ENCODE measurements at regions of chr10 and their contacts with region 1.

Region 1: GRCh38 chr10:91298224-91298871 is 77.9 kb downstream of the PCGF5 start:
- DNase-seq: peak; percentile 86
- H3K4me3 ChIP-seq: peak overlapping the region; percentile 45
- H3K27ac ChIP-seq: no peak overlapping the region
- H3K4me1 ChIP-seq: peaks cover 10% of the 10 kb centered on the region
- H3K27me3 ChIP-seq: no peaks in the 10 kb centered on the region
- CTCF ChIP-seq: peak; percentile 93

Region 2: GRCh38 chr10:91367127-91367531 is 68.8 kb after region 1 on chr10:
- CTCF ChIA-PET with region 1: interaction called, 7 read pairs
- POLR2A ChIA-PET with region 1: no interaction called
- intact Hi-C with region 1: loop called (anchors 1 kb)
- DNase-seq: no peak
- H3K4me3 ChIP-seq: no peak overlapping the region
- H3K27ac ChIP-seq: no peak overlapping the region
- H3K4me1 ChIP-seq: no peaks in the 10 kb centered on the region
- H3K27me3 ChIP-seq: no peaks in the 10 kb centered on the region
- CTCF ChIP-seq: no peak

Region 3: GRCh38 chr10:91479583-91479982 is 181.2 kb after region 1 on chr10:
- CTCF ChIA-PET with region 1: no interaction called
- POLR2A ChIA-PET with region 1: no interaction called
- intact Hi-C with region 1: loop called (anchors 10 kb)
- DNase-seq: no peak
- H3K4me3 ChIP-seq: no peak overlapping the region
- H3K27ac ChIP-seq: no peak overlapping the region
- H3K4me1 ChIP-seq: no peaks in the 10 kb centered on the region
- H3K27me3 ChIP-seq: no peaks in the 10 kb centered on the region
- CTCF ChIP-seq: no peak

Region 4: DNA sequence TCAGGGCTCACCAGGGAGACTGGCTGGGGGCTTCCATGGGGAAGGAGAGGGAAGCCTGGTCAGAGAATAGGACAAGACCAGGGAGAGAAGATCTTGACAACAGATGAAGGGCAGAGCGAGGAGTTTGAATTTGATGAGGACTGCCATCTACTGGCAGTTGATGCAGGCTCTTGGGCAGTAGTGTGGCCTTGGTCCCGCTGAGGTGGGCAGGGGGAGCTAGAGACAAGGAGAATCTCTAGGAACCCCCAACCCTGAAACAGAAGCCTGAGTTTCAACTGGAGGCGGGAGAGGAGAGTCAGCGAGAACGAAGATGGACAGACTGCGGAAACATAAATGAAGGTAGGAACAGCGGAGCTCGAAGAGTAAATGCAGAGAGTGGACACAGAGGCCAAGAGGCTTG is 253.5 kb after region 1 on chr10:
- CTCF ChIA-PET with region 1: interaction called, 11 read pairs
- POLR2A ChIA-PET with region 1: no interaction called
- intact Hi-C with region 1: loop called (anchors 1 kb)
- DNase-seq: peak; percentile 78
- H3K4me3 ChIP-seq: no peak overlapping the region
- H3K27ac ChIP-seq: no peak overlapping the region
- H3K4me1 ChIP-seq: peaks cover 3% of the 10 kb centered on the region
- H3K27me3 ChIP-seq: no peaks in the 10 kb centered on the region
- CTCF ChIP-seq: peak; percentile 94

Region 5: GRCh38 chr10:91635401-91636400 is 337.4 kb after region 1 on chr10:
- CTCF ChIA-PET with region 1: interaction called, 15 read pairs
- POLR2A ChIA-PET with region 1: no interaction called
- intact Hi-C with region 1: loop called (anchors 2 kb)
- DNase-seq: peak; percentile 88
- H3K4me3 ChIP-seq: no peak overlapping the region
- H3K27ac ChIP-seq: no peak overlapping the region
- H3K4me1 ChIP-seq: peaks cover 7% of the 10 kb centered on the region
- H3K27me3 ChIP-seq: no peaks in the 10 kb centered on the region
- CTCF ChIP-seq: peak; percentile 83

Region 6: DNA sequence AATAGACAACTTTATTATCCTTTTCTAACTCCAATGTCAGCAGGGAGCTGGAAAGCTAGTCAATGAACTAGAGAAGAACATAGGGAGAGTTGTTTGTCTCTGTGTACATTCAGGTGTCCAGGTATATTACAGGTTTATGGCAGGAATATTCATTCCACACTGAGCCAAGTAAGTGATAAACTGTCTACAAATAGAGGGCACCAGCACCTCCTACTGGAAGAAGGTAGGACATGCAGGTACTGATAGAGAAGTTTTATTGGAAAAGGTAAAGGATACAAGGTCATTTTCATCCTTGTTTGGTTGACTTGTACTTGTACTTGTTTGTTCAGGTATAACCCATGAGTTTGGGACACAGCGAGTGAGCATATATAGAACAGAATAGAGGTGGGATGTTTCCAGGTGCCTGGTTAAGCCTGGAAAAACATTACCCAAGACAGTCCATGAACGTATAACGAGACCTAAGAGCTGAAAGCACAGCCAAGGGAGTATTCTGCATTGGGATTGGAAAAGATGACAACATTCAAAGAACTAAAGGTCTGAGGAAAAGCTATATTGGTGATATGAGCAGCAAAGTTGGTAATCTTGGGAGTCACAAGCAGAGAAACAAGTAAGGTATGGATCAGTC is 395.9 kb after region 1 on chr10:
- CTCF ChIA-PET with region 1: no interaction called
- POLR2A ChIA-PET with region 1: no interaction called
- intact Hi-C with region 1: loop called (anchors 5 kb)
- DNase-seq: peak; percentile 62
- H3K4me3 ChIP-seq: no peak overlapping the region
- H3K27ac ChIP-seq: no peak overlapping the region
- H3K4me1 ChIP-seq: no peaks in the 10 kb centered on the region
- H3K27me3 ChIP-seq: no peaks in the 10 kb centered on the region
- CTCF ChIP-seq: peak; percentile 83

Region 7: DNA sequence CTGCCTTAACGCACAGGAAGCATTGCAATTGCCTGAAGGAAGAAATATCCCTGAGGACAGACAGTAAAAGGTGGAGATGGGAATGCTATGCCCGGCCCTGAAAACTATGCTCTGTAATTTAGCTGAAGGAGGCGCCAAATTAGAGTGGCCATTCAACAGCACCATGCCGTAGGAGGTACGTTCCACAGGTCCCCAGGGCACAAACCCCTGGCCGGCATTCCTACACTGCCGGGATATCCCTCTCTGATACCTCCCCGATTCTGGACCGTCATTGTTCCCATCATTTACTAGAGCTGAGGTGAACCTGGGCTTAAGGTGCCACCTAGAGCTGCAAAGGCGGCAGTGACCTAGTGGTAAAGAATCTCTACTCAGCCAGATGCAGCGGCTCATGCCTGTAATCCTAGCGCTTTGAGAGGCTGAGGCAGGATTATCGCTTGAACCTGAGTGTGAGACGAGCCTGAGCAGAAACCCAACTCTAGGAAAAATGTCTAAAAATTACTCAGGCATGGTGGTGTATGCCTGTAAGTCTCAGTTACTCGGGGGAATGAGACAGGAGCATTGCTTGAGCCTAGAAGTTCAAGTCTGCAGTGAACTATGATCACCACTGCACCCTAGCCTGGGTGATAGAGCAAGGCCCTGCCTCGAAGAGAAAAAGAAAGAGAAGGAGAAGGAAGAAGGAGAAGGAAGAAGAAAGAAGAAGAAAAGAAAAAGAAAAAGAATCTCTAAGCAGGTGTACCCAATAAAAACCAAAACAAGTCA is 446.9 kb after region 1 on chr10:
- CTCF ChIA-PET with region 1: interaction called, 12 read pairs
- POLR2A ChIA-PET with region 1: no interaction called
- intact Hi-C with region 1: no loop called
- DNase-seq: peak; percentile 4
- H3K4me3 ChIP-seq: no peak overlapping the region
- H3K27ac ChIP-seq: no peak overlapping the region
- H3K4me1 ChIP-seq: no peaks in the 10 kb centered on the region
- H3K27me3 ChIP-seq: peaks cover 6% of the 10 kb centered on the region
- CTCF ChIP-seq: 0 out of 2 replicates have a peak, but pooled peaks have one; percentile 28

Measured in A673 (cell line).